ENCODE measurements at regions of chr3 and their contacts with region 1.

Region 1: DNA sequence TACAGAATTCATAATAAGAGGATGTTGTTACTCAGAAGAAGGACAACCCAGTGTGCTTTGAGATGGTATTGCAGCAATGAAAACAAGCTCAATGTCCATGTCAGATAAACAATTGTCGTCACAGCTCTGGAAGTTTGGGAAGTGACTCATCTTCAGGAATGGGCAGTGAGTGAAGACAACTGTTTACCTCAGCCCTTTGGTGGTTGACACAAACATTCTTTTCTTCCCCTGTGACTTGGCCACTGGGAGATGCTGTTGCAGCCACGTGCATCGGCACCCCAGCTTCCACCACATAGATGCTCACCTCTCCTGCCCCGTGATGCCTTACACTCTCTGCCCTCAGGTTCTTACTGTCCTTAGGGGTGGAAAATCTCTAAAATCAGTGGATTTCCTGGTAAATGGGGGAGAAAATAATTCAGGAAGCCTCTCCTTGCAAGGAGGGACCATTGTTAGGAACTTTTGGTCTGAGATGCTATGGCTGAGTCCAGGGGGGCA is 114.1 kb upstream of the GALNT15 start:
- DNase-seq: peak; percentile 100
- ATAC-seq: peak; percentile 79
- H3K4me3 ChIP-seq: no peak overlapping the region
- H3K27ac ChIP-seq: peak overlapping the region; percentile 95
- H3K4me1 ChIP-seq: peaks cover 33% of the 10 kb centered on the region
- H3K27me3 ChIP-seq: no peaks in the 10 kb centered on the region
- CTCF ChIP-seq: peak; percentile 45
- POLR2A ChIP-seq: peak; percentile 43; the same call in 1 of the 2 replicates
- RAD21 ChIP-seq: peak; percentile 54

Region 2: DNA sequence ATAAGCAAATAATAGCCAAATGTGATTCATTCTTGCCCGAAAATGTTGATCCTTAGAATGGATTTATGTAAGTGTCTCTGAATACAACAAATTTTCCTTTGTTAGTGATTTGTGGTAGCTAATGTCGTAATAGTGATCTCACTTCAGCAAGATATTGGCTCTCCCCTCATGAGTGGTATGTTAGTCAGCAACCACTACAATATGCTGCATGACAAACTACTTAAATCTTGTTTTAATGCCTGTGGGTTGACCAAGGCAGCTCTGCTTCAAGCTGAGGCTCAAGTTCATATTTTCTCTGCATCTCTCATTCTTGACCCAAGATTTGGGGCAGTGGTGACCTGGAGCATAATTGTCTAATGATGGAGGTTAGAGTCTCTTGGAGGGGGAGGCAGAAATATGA is 64.2 kb after region 1 on chr3:
- CTCF ChIA-PET with region 1: interaction called, 3 read pairs
- POLR2A ChIA-PET with region 1: interaction called, 3 read pairs
- dilution Hi-C with region 1: no loop called
- in situ Hi-C with region 1: no loop called
- intact Hi-C with region 1: loop called (anchors 1 kb)
- DNase-seq: peak; percentile 100
- ATAC-seq: peak; percentile 87
- H3K4me3 ChIP-seq: no peak overlapping the region
- H3K27ac ChIP-seq: peak overlapping the region; percentile 97
- H3K4me1 ChIP-seq: peaks cover 35% of the 10 kb centered on the region
- H3K27me3 ChIP-seq: no peaks in the 10 kb centered on the region
- CTCF ChIP-seq: no peak
- POLR2A ChIP-seq: no peak; the same call in 1 of the 2 replicates
- RAD21 ChIP-seq: peak; percentile 2

Measured in IMR-90 (cell line).